Aorta (tissue), 5 donors: ENCODE measurements at regions of chr7 and their contacts with region 1.

Region 1: DNA sequence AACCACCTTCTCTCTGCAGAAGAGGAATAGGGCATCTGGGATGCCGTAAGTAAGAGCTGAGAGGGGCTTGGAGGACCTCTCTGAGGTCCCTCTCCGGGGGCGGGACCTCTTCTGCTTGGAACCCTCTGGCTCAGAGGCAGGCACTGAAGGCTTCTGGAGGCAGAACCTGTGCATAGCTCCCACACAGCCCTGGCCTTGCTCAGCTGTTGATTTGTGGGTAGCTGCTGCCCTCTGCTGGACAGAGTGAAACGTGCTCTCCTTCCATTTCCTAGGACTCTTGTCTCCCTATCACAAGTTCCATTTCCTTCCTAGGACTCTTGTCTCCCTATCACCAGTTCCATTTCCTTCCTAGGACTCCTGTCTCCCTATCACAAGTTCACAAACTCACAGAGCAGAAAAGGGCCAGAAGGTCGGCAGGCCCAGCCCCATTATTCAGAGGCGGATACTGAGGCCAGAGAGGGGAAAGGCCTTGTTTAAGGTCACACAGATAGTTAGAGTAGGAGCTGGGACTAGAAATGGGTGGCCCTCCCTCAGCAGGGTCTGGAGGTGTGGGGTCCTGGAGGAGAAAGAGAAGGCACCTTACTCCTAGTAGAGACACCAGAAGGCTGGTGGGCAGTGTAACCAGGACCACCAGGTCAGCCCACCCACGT is 30.3 kb upstream of the GARS1 start:
- DNase-seq: peak; percentile 85 to 91
- ATAC-seq: peak; percentile 94
- H3K4me3 ChIP-seq: no peak overlapping the region
- H3K27ac ChIP-seq: no peak overlapping the region
- H3K4me1 ChIP-seq: no peaks in the 10 kb centered on the region
- H3K27me3 ChIP-seq: no peaks in the 10 kb centered on the region

Region 2: GRCh38 chr7:30164567-30164966 is 399.8 kb before region 1 on chr7:
- intact Hi-C with region 1: loop called in 1 of 2 experiments (anchors 10 kb)
- DNase-seq: no peak
- ATAC-seq: peak; percentile 74
- H3K4me3 ChIP-seq: no peak overlapping the region
- H3K27ac ChIP-seq: no peak overlapping the region
- H3K4me1 ChIP-seq: no peaks in the 10 kb centered on the region
- H3K27me3 ChIP-seq: no peaks in the 10 kb centered on the region

Region 3: GRCh38 chr7:30276203-30276900 is 288.0 kb before region 1 on chr7:
- intact Hi-C with region 1: loop called (anchors 2 to 10 kb)
- DNase-seq: no peak
- ATAC-seq: peak; percentile 46
- H3K4me3 ChIP-seq: no peak overlapping the region
- H3K27ac ChIP-seq: no peak overlapping the region
- H3K4me1 ChIP-seq: no peaks in the 10 kb centered on the region
- H3K27me3 ChIP-seq: no peaks in the 10 kb centered on the region

Region 4: DNA sequence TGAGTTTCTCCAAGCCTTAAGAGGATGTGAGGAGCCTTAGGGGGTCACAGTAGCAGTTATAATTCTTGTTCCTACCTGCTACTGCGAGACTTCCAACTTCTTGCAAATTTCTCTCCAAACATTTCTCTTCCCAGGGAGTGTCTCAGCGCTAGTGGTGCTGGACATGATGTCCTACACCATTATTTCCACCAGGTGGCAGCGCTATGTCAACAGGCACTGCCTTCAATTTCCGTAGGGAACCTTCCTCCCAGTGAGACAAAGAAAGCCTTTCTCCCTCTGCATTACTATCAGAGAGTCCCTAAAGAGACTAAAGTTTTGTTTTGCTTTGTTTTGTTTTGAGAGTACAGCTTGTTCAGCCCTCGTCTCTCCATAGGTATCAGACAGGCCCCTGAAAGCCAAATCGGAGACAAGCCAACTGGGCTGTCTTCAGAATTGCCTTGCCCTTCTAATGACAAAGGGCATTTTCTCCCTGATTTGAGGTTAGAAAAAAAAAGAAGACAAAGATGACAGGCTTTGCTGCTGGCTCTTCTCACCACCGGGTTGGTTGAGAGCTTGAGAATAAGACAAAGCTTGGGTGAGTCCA is 15.5 kb before region 1 on chr7:
- intact Hi-C with region 1: loop called in 1 of 2 experiments (anchors 2 kb)
- DNase-seq: peak in 1 of 2 donors; percentile 67
- ATAC-seq: peak; percentile 84
- H3K4me3 ChIP-seq: no peak overlapping the region
- H3K27ac ChIP-seq: no peak overlapping the region
- H3K4me1 ChIP-seq: no peaks in the 10 kb centered on the region
- H3K27me3 ChIP-seq: no peaks in the 10 kb centered on the region